SK-N-SH (cell line): ENCODE measurements at regions of chr20 and their contacts with region 1.

Region 1: GRCh38 chr20:50929299-50930138 is 1.7 kb downstream of the ADNP start:
- DNase-seq: peak; percentile 84
- H3K4me3 ChIP-seq: peak overlapping the region; percentile 82 to 94
- H3K27ac ChIP-seq: peak overlapping the region; percentile 82 to 99
- H3K4me1 ChIP-seq: peaks cover 21 to 36% of the 10 kb centered on the region in 2 experiments
- H3K27me3 ChIP-seq: no peaks in the 10 kb centered on the region
- CTCF ChIP-seq: peak; percentile 99
- EP300 ChIP-seq: peak; percentile 39 to 48; a peak in 2 of 4 replicates
- RAD21 ChIP-seq: peak; percentile 86

Region 2: DNA sequence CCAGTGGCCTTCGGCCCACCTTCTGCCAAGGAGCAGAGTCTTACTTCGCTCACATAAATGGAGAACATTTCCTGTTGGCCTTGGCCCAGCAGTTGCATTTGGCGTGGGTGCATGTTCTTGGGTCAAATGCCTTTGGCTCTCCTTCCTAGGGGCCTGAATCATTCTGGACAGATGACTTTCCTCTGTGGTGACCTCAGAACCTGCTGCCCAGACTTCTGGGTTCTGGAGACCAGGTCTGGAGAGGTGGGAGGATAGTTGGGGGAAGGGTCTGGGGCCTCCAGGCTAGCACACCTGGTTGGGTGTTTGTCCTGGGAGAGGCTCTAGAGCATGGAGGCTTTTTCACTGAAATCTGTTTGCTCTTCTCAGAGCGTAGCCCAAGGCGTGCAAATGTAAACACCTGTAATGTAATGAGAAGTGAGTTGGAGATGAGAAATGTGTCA is 105.3 kb before region 1 on chr20:
- CTCF ChIA-PET with region 1: interaction called, 62 read pairs
- POLR2A ChIA-PET with region 1: interaction called, 3 read pairs
- DNase-seq: no peak
- H3K4me3 ChIP-seq: no peak overlapping the region
- H3K27ac ChIP-seq: peak overlapping the region in 1 of 2 experiments; percentile 58; a peak in 2 of 4 replicates
- H3K4me1 ChIP-seq: peaks cover 3 to 7% of the 10 kb centered on the region in 2 experiments; a peak in 3 of 4 replicates
- H3K27me3 ChIP-seq: no peaks in the 10 kb centered on the region
- CTCF ChIP-seq: no peak
- EP300 ChIP-seq: 0 out of 4 replicates have a peak, but pooled peaks of 1 of the 2 experiments have one; percentile 26
- RAD21 ChIP-seq: no peak

Region 3: GRCh38 chr20:50856036-50856756 is 73.3 kb before region 1 on chr20:
- CTCF ChIA-PET with region 1: interaction called, 10 read pairs
- POLR2A ChIA-PET with region 1: no interaction called
- DNase-seq: peak; percentile 71
- H3K4me3 ChIP-seq: no peak overlapping the region
- H3K27ac ChIP-seq: peak overlapping the region; percentile 20 to 25; a peak in 2 of 4 replicates
- H3K4me1 ChIP-seq: peaks cover 0 to 21% of the 10 kb centered on the region in 2 experiments; a peak in 2 of 4 replicates
- H3K27me3 ChIP-seq: no peaks in the 10 kb centered on the region
- CTCF ChIP-seq: no peak
- EP300 ChIP-seq: peak in 1 of 2 experiments; percentile 44; a peak in 1 of 4 replicates
- RAD21 ChIP-seq: no peak

Region 4: GRCh38 chr20:50904067-50904570 is 25.4 kb before region 1 on chr20:
- CTCF ChIA-PET with region 1: interaction called, 137 read pairs
- POLR2A ChIA-PET with region 1: no interaction called
- DNase-seq: no peak
- H3K4me3 ChIP-seq: no peak overlapping the region
- H3K27ac ChIP-seq: no peak overlapping the region
- H3K4me1 ChIP-seq: no peaks in the 10 kb centered on the region; a peak in 1 of 4 replicates
- H3K27me3 ChIP-seq: no peaks in the 10 kb centered on the region
- CTCF ChIP-seq: no peak
- EP300 ChIP-seq: no peak
- RAD21 ChIP-seq: no peak

Region 5: DNA sequence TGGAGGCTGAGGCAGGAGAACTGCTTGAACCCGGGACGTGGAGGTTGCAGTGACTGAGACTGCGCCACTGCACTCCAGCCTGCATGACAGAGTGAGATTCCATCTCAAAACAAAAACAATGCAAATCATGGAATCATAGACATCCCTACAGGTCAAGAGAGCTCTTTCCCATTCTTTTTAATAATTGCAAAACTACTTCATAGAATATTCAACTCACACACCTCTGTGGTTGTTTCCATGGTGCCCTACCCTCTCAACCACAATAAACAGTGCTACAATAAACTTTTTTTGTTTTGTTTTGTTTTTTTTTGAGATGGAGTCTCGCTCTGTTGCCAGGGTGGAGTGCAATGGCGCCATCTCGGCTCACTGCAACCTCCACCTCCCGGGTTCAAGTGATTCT is 13.6 kb after region 1 on chr20:
- CTCF ChIA-PET with region 1: interaction called, 10 read pairs
- POLR2A ChIA-PET with region 1: no interaction called
- DNase-seq: no peak
- H3K4me3 ChIP-seq: no peak overlapping the region
- H3K27ac ChIP-seq: no peak overlapping the region
- H3K4me1 ChIP-seq: no peaks in the 10 kb centered on the region
- H3K27me3 ChIP-seq: no peaks in the 10 kb centered on the region
- CTCF ChIP-seq: no peak
- EP300 ChIP-seq: no peak
- RAD21 ChIP-seq: no peak

Region 6: DNA sequence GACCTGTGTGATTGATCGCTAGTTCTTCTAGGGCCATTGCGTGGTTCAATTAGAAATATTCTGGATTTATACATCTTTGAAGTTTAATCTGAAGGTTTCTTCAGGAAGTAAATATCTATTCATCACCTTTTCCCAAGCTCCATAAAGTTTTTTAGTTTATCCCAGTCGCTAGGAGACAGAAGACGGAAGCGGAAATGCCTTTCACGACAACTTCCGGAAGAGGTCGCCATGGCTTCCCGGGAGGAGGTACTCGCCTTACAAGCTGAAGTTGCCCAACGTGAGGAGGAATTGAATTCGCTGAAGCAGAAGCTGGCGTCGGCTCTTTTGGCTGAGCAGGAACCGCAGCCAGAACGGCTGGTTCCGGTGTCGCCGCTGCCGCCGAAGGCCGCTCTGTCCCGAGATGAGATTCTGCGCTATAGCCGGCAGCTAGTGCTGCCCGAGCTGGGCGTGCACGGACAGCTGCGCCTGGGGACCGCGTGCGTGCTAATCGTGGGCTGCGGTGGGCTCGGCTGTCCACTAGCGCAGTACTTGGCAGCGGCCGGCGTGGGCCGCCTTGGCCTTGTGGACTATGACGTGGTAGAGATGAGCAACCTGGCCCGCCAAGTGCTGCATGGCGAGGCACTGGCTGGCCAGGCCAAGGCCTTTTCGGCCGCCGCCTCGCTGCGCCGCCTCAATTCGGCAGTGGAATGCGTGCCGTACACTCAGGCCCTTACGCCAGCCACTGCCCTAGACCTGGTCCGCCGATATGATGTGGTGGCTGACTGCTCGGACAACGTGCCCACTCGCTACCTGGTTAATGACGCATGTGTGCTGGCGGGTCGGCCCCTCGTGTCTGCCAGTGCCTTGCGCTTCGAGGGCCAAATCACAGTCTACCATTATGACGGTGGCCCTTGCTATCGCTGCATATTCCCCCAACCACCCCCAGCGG is 29.4 kb after region 1 on chr20 and contains the start of gene MOCS3:
- CTCF ChIA-PET with region 1: interaction called, 16 read pairs
- POLR2A ChIA-PET with region 1: interaction called, 25 read pairs
- DNase-seq: peak; percentile 86
- H3K4me3 ChIP-seq: peak within 1 kb of the TSS; percentile 98 to 100
- H3K27ac ChIP-seq: peak within 1 kb of the TSS; percentile 91 to 96
- H3K4me1 ChIP-seq: peaks cover 18 to 22% of the 10 kb centered on the region in 2 experiments
- H3K27me3 ChIP-seq: no peaks in the 10 kb centered on the region
- CTCF ChIP-seq: no peak
- EP300 ChIP-seq: 0 out of 4 replicates have a peak, but pooled peaks of 1 of the 2 experiments have one; percentile 32
- RAD21 ChIP-seq: no peak
- polyA plus RNA-seq, gene MOCS3: 4.0 and 4.4 TPM in 2 replicates